ENCODE measurements at regions of chr10 and their contacts with region 1.

Region 1: DNA sequence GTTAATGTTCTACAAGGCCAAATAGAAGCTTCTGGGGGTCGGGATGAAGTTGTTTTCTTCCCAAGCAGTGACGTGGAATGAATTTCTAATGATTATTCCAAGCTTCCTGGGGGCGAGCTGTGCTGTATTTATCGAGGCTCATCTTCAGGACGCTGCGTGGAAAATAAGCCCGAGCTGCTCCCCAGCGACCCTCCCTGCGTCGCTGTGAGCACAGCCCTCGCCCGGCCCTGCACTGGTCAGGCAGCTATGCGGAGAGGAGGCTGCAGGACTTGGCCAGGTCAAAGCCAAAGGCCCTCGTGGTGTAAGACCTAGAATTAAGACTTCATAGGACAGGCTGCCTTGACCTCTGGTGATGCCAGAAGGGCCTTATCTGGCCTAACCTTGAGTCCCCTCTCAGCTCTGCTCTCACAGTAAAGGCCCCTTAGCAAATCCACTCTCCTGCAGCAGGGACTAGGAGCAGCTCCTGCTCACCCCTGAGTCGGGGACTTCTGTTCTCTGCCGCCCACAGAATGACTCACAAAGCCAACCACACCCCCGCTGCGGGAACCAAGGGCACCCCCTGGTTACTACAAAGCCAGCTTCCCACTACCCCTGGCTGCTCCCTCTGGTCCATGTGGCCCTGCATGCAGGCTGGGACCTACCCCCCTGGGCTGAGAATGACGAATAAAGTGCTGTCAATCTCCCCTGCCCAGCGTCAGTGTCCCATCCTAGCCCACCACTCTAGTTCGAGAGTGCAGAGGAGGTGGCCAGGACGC is 501.6 kb downstream of the TCERG1L start:
- ATAC-seq: peak in 3 of 8 experiments; percentile 33 to 56 (median 54)
- H3K4me3 ChIP-seq: no peak overlapping the region
- H3K27ac ChIP-seq: no peak overlapping the region
- H3K4me1 ChIP-seq: no peaks in the 10 kb centered on the region

Region 2: DNA sequence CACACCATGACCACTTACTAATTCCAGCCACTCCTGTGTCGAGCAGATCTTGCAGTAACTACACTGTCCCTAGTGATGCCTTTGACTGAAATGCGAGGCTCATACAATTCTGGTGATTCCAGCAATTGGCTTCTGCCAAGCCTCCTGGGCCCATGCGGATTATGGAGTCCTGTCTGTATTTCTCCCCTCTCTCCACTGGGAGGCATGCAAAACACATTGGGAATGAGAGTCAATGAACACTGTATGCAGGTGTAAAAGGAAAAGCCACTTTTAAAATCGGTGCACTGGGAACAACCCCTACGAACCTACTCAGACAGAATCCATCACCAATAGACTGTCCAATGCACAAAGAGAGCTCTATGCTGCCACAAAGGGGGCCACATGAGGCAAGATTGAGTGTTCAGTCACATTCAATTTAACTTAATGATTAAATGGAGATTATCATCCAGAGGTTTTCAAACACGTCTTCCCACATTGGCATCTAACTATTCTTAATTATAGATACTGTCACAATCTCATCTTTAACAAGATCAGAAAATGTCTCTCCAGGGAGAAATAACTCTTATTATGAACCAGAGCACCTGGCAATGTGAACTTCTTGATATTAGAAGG is 123.1 kb before region 1 on chr10:
- in situ Hi-C with region 1: loop called in 1 of 9 experiments (anchors 25 kb)
- ATAC-seq: peak in 5 of 8 experiments; percentile 26 to 89 (median 66)
- H3K4me3 ChIP-seq: no peak overlapping the region
- H3K27ac ChIP-seq: no peak overlapping the region
- H3K4me1 ChIP-seq: peaks cover 0 to 6% of the 10 kb centered on the region in 2 donors

Region 3: DNA sequence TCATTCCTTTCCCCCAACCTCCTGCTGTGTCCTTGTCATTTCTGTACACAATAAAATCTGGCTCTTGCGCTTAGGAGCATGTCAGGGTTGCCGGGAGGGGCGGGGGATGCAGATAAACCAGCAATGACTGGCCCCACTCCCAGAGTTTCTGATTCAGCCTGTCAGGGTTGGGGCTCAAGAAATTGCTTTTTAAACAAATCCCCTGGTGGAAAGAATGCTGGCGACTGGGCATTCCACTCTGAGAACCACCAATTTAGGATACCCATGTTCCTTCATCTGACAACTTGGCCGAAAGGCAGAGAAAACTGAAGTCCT is 125.2 kb after region 1 on chr10:
- in situ Hi-C with region 1: no loop called
- ATAC-seq: peak in 3 of 8 experiments; percentile 64 to 90 (median 84)
- H3K4me3 ChIP-seq: no peak overlapping the region
- H3K27ac ChIP-seq: no peak overlapping the region
- H3K4me1 ChIP-seq: peaks cover 0 to 11% of the 10 kb centered on the region in 2 donors

Measured in motor neuron (in vitro differentiated cells).